Panc1 (cell line): ENCODE measurements at regions of chr19 and their contacts with region 1.

Region 1: DNA sequence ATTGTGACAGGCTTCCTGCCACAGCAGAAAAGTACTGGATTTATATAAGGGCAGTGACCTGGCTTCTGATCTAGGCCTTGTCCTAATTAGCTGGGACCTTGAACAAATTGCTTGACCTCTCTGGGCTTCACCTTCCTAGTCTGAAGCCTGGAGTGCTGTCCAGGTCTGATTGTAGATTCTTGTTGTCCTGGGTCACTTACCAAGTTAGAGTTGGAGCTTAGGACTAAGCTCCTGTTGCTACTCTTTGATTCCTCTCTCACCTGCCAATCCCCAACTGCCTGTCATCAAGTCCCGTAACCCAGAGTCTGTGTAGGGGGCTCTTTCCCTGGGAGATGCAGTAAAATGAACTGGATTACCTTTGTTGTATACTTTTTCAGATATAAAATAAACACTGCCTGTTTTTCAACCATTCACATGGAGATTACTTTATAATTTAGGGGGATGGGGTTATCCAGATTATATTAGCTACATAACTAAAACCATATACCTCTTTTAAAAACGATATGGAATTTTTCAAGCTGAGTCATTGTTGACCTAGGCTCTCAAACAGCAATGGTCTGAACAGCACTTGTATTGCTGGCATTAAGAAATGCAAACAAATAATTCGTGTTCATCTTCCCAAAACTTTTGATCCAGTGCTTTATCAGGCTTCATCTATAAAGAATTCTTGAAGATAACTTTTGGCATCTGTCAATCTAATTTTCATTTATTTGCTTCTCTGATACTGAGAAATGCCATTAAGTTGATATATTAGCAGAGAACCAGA is 5.8 kb downstream of the ARHGAP35 start:
- DNase-seq: no peak
- ATAC-seq: peak; percentile 70
- H3K4me3 ChIP-seq: peak overlapping the region in 1 of 2 experiments; percentile 5; a peak in 1 of 4 replicates
- H3K27ac ChIP-seq: peak overlapping the region; percentile 94
- H3K4me1 ChIP-seq: peaks cover 63% of the 10 kb centered on the region
- H3K27me3 ChIP-seq: no peaks in the 10 kb centered on the region
- CTCF ChIP-seq: no peak

Region 2: GRCh38 chr19:46890423-46891170 is 24.0 kb after region 1 on chr19:
- CTCF ChIA-PET with region 1: interaction called, 15 read pairs
- POLR2A ChIA-PET with region 1: no interaction called
- in situ Hi-C with region 1: no loop called
- intact Hi-C with region 1: no loop called
- DNase-seq: peak; percentile 87
- ATAC-seq: peak; percentile 93
- H3K4me3 ChIP-seq: no peak overlapping the region
- H3K27ac ChIP-seq: peak overlapping the region; percentile 84
- H3K4me1 ChIP-seq: peaks cover 37% of the 10 kb centered on the region
- H3K27me3 ChIP-seq: no peaks in the 10 kb centered on the region
- CTCF ChIP-seq: no peak